Sigmoid colon (tissue), 7 donors: ENCODE measurements at regions of chr19 and their contacts with region 1.

Region 1: GRCh38 chr19:51338563-51339312 is 3.2 kb downstream of the VSIG10L start:
- DNase-seq: peak; percentile 91
- H3K4me3 ChIP-seq: peak overlapping the region; percentile 43 to 64 (median 56)
- H3K27ac ChIP-seq: peak overlapping the region; percentile 69 to 92 (median 74)
- H3K4me1 ChIP-seq: peaks cover 0 to 25% (median 18%) of the 10 kb centered on the region in 4 donors
- H3K27me3 ChIP-seq: no peaks in the 10 kb centered on the region
- CTCF ChIP-seq: peak; percentile 77 to 87 (median 80)
- EP300 ChIP-seq: no peak
- POLR2A ChIP-seq: no peak

Region 2: GRCh38 chr19:51354742-51355148 is 16.0 kb after region 1 on chr19:
- intact Hi-C with region 1: no loop called
- DNase-seq: no peak
- H3K4me3 ChIP-seq: no peak overlapping the region
- H3K27ac ChIP-seq: no peak overlapping the region
- H3K4me1 ChIP-seq: no peaks in the 10 kb centered on the region
- H3K27me3 ChIP-seq: no peaks in the 10 kb centered on the region
- CTCF ChIP-seq: no peak
- EP300 ChIP-seq: no peak
- POLR2A ChIP-seq: no peak

Region 3: GRCh38 chr19:51367565-51368365 is 29.0 kb after region 1 on chr19:
- intact Hi-C with region 1: loop called (anchors 1 kb)
- DNase-seq: peak; percentile 100
- H3K4me3 ChIP-seq: peak overlapping the region; percentile 64 to 93 (median 74)
- H3K27ac ChIP-seq: peak overlapping the region; percentile 97 to 100 (median 98)
- H3K4me1 ChIP-seq: peaks cover 0 to 46% (median 26%) of the 10 kb centered on the region in 4 donors
- H3K27me3 ChIP-seq: no peaks in the 10 kb centered on the region
- CTCF ChIP-seq: no peak
- EP300 ChIP-seq: no peak
- POLR2A ChIP-seq: no peak

Region 4: GRCh38 chr19:51393959-51394836 is 55.5 kb after region 1 on chr19:
- intact Hi-C with region 1: loop called (anchors 1 kb)
- DNase-seq: peak; percentile 97
- H3K4me3 ChIP-seq: peak overlapping the region; percentile 6 to 42 (median 34)
- H3K27ac ChIP-seq: peak overlapping the region; percentile 65 to 81 (median 76)
- H3K4me1 ChIP-seq: peaks cover 0 to 12% (median 8%) of the 10 kb centered on the region in 4 donors
- H3K27me3 ChIP-seq: no peaks in the 10 kb centered on the region
- CTCF ChIP-seq: no peak
- EP300 ChIP-seq: peak in 1 of 4 donors; percentile 29
- POLR2A ChIP-seq: no peak

Region 5: GRCh38 chr19:51439021-51439465 is 100.3 kb after region 1 on chr19:
- intact Hi-C with region 1: loop called (anchors 1 kb)
- DNase-seq: no peak
- H3K4me3 ChIP-seq: no peak overlapping the region
- H3K27ac ChIP-seq: no peak overlapping the region
- H3K4me1 ChIP-seq: no peaks in the 10 kb centered on the region
- H3K27me3 ChIP-seq: peaks cover 0 to 62% (median 7%) of the 10 kb centered on the region in 3 donors
- CTCF ChIP-seq: no peak
- EP300 ChIP-seq: no peak
- POLR2A ChIP-seq: no peak

Region 6: GRCh38 chr19:51570962-51571575 is 232.3 kb after region 1 on chr19 and contains the start of gene ZNF175:
- intact Hi-C with region 1: loop called (anchors 5 kb)
- DNase-seq: peak; percentile 97
- H3K4me3 ChIP-seq: peak within 1 kb of the TSS; percentile 51 to 75 (median 68)
- H3K27ac ChIP-seq: peak within 1 kb of the TSS; percentile 63 to 78 (median 76)
- H3K4me1 ChIP-seq: peaks cover 0 to 17% (median 13%) of the 10 kb centered on the region in 4 donors
- H3K27me3 ChIP-seq: no peaks in the 10 kb centered on the region
- CTCF ChIP-seq: no peak
- EP300 ChIP-seq: no peak
- POLR2A ChIP-seq: no peak
- total RNA-seq, gene ZNF175: 3.3 to 5.8 (median 5.2) TPM

Region 7: GRCh38 chr19:51887522-51888498 is 549.1 kb after region 1 on chr19 and contains the start of gene ZNF577:
- intact Hi-C with region 1: loop called (anchors 5 kb)
- DNase-seq: peak; percentile 94
- H3K4me3 ChIP-seq: peak within 1 kb of the TSS; percentile 58 to 72 (median 62)
- H3K27ac ChIP-seq: peak within 1 kb of the TSS; percentile 80 to 83 (median 80)
- H3K4me1 ChIP-seq: peaks cover 0 to 14% (median 10%) of the 10 kb centered on the region in 4 donors
- H3K27me3 ChIP-seq: no peaks in the 10 kb centered on the region
- CTCF ChIP-seq: no peak
- EP300 ChIP-seq: peak in 1 of 4 donors; percentile 48
- POLR2A ChIP-seq: no peak
- total RNA-seq, gene ZNF577: 21.7 to 28.0 (median 23.4) TPM